GM13977 (cell line): ENCODE measurements at regions of chr7 and their contacts with region 1.

Region 1: DNA sequence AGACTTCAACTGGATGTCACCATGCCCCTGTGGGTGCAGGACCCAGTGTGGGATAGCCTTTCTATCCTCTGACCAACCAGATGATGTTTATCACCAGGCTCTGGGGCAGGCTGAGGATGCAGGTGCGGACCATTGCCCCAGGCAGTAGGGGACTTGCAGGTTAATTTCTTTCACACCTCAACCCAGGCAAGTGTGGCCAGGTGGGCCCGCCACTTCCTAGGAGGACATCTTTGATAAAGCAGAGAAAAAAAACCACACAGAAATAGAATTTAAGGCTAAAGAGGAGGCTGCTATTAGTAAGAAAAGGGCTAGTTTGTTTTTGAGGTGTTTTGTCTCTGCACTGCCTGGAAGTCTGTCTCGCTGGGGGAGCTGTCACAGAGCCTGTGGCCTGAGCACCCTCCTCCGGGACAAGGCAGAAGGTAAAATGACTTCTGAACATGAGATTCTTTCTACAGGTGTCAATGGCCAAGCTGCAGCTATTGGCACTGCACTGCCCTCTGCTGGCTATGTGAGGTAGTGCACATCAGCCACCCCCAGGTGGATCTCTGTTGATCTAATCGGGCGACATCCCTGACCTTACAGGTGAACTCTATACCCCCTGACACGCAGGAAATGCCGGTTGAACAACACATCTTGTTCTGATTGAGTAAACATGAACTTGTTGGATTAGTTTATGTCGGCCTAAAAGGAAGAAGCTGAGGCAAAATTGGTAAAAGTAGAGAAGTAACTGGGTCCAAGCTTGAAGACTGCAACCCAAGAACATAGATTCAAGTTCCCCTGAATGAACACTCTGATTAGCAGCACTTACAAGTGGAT is 21.0 kb downstream of the UPP1 start:
- DNase-seq: peak; percentile 80
- CTCF ChIP-seq: peak; percentile 91

Region 2: DNA sequence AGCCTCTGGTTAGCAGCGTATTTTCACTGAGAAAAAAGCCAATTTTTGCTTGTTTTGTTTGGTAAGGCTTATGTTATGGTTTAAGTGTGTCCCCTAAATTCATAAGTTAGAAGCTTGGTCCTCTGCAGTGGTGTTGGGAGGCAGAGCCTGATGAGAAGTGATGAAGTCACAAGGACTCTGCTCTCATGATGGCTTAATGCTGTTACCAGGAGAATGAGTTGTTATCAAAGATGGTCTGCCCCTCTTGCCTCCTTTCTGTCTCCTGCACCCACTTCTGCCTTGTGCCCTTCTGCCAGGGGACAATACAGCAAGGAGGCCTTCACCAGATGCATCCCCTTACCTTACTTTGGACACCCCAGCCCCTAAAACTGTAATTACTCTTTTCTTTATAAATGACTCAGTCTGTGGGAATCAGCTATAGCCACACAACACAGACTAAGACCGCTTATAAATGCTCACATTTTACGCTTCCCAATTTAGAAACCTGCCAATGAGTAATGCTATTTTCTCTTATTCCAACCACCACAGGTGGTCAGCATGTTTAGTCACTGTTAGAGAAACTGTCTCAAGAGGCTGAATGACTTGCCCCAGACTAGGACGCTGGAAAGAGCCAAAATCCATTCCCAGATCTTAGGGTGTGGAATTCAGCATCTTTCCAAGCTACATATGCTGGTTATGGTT is 155.7 kb before region 1 on chr7:
- in situ Hi-C with region 1: loop called (anchors 10 kb)
- DNase-seq: peak; percentile 59
- CTCF ChIP-seq: no peak

Region 3: DNA sequence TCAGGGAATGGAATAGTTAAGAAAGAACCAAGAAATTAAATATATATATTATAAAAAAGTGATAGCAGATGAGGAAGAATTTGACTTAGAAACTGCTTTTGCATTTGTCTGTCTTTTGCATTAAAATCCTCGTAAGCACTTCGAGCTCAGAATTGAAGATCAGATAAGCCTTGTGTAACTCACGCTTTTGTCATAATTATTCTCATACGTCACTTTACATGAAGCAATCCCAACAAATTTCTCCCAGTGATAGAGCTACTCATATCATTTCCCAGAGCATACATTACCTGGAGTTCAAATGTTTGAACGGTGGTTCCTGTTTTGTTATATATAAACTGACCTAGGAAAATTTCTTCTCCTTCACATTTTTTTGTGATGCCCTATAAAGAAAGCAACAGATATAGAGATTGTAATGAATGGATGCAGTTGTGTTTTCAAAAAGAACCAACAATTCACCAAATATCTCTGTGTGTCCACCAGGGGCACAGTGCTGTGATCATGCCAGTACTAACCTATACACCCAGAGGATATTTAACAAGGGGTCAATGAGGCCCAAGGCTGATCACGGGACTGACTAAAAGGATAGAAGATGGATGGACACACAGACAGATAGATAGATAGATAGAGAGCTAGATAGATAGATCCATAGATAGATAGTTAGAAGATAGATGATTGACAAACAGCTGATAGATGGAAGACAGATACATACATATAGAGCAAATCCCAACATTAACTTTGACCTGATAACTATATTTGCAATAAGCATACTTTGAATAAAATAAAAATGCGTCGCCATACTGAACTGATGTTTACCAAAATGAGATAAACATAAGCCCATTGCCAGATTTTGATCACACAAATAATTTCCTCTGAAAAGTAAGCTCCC is 121.3 kb before region 1 on chr7:
- in situ Hi-C with region 1: loop called (anchors 10 kb)
- DNase-seq: no peak
- CTCF ChIP-seq: peak; percentile 29

Region 4: GRCh38 chr7:48398191-48398590 is 288.1 kb after region 1 on chr7:
- in situ Hi-C with region 1: no loop called
- DNase-seq: no peak
- CTCF ChIP-seq: no peak